ENCODE measurements at regions of chr7 and their contacts with region 1.

Region 1: GRCh38 chr7:68748934-68749900 is 849.1 kb upstream of the AUTS2 start:
- DNase-seq: no peak
- ATAC-seq: no peak
- H3K4me3 ChIP-seq: no peak overlapping the region
- H3K27ac ChIP-seq: no peak overlapping the region
- H3K4me1 ChIP-seq: no peaks in the 10 kb centered on the region
- H3K27me3 ChIP-seq: no peaks in the 10 kb centered on the region
- CTCF ChIP-seq: no peak

Region 2: DNA sequence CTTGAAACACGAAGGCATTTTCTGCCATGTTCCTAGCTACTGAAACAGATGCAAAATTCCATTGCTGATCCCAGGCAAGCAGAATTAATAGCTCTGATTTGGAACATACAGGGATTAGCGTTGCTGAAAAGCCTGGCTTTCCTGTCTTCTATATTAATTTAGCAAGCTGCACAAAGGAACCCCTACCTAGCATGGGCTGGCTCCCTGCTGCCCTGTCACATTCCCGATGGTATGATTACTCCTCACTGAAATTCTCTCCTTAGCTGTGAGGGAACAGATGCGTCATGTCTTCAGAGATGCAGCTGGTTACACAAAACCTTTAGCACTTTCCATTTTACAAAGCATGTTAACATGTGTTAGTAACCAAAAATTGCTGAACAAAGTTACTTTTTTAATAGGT is 873.7 kb before region 1 on chr7:
- CTCF ChIA-PET with region 1: interaction called, 10 read pairs
- POLR2A ChIA-PET with region 1: no interaction called
- intact Hi-C with region 1: no loop called
- DNase-seq: no peak
- ATAC-seq: no peak
- H3K4me3 ChIP-seq: no peak overlapping the region
- H3K27ac ChIP-seq: no peak overlapping the region
- H3K4me1 ChIP-seq: no peaks in the 10 kb centered on the region
- H3K27me3 ChIP-seq: no peaks in the 10 kb centered on the region
- CTCF ChIP-seq: no peak

Region 3: DNA sequence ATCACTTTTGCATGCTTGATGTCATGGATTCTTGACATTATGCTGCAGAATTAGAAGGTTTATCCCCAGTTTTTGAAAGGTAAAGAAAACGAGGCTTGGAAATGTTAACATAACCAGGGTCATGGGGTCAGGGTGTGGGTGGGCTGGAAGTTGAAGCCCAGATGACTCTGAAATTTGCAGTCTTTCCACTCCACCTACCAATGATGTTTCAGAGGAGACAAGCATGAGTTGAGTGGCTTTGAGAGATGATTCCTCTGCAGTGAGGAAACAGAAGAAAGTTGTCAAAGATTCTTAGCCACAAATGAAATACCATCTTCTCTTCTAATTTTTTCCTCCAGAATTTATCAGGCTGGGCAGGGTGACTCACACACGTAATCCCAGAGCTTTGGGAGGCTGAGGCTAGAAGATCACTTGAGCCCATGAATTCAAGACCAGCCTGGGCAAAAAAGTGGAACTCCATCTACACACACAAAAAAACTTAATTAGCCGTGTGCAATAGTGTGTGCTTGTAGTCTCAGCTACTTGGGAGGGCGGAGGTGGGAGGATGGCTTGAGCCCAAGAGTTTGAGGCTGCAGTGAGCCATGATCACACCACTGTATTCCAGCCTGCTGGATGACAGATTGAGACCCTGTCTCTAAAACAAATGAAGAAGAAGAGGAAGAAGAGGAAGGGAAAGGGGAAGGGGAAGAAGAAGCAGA is 609.9 kb after region 1 on chr7:
- CTCF ChIA-PET with region 1: no interaction called
- POLR2A ChIA-PET with region 1: no interaction called
- intact Hi-C with region 1: no loop called
- DNase-seq: no peak
- ATAC-seq: no peak
- H3K4me3 ChIP-seq: no peak overlapping the region
- H3K27ac ChIP-seq: no peak overlapping the region
- H3K4me1 ChIP-seq: no peaks in the 10 kb centered on the region
- H3K27me3 ChIP-seq: no peaks in the 10 kb centered on the region
- CTCF ChIP-seq: no peak

Measured in PC-3 (cell line).